Mammary epithelial cell (primary cell): ENCODE measurements at regions of chr4 and their contacts with region 1.

Region 1: DNA sequence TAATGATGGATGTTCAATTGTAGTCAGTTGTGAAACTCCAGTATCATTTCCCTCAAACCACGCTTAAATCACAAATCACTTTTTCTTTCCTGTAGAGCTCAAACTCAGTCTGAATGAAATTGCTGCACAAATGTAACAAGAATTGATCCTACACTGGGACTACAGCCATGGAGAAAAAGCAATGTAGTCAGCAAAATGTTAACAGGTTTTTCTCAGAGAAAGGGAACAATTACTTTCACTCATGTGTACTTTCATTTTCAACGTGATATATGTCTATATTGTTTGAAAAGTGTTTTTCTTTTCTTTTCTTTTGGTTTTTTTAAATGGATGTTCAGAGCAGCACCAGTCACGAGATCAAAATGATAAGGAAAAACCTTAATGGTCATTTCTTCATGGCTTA is 22.7 kb downstream of the SDAD1 start:
- DNase-seq: no peak
- H3K4me3 ChIP-seq: no peak overlapping the region
- H3K27ac ChIP-seq: no peak overlapping the region
- H3K4me1 ChIP-seq: no peaks in the 10 kb centered on the region
- H3K27me3 ChIP-seq: no peaks in the 10 kb centered on the region
- CTCF ChIP-seq: no peak

Region 2: DNA sequence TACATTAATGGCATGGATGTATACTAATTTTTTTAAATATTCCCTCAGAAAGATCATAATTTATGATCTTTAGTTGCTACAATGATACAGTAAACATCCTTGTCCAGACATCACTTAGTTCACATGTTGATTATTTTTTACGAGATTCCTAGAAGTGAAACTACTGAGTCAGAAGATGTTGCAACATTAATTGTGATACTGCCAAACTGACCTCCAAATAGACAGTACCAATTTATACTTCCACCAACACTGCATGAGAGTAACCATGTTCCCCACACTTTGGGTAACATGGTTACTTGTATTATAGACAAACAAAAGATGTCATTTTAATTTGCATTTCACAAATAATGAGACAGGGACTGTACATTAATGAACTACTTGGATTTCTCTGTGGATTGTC is 473.5 kb before region 1 on chr4:
- CTCF ChIA-PET with region 1: no interaction called
- dilution Hi-C with region 1: no loop called
- in situ Hi-C with region 1: no loop called
- intact Hi-C with region 1: no loop called
- DNase-seq: peak; percentile 84
- H3K4me3 ChIP-seq: no peak overlapping the region
- H3K27ac ChIP-seq: peak overlapping the region; percentile 47
- H3K4me1 ChIP-seq: peaks cover 7% of the 10 kb centered on the region
- H3K27me3 ChIP-seq: no peaks in the 10 kb centered on the region
- CTCF ChIP-seq: no peak

Region 3: GRCh38 chr4:75769036-75769435 is 199.0 kb before region 1 on chr4:
- CTCF ChIA-PET with region 1: no interaction called
- dilution Hi-C with region 1: no loop called
- in situ Hi-C with region 1: no loop called
- intact Hi-C with region 1: no loop called
- DNase-seq: no peak
- H3K4me3 ChIP-seq: no peak overlapping the region
- H3K27ac ChIP-seq: no peak overlapping the region
- H3K4me1 ChIP-seq: no peaks in the 10 kb centered on the region
- H3K27me3 ChIP-seq: no peaks in the 10 kb centered on the region
- CTCF ChIP-seq: no peak

Region 4: GRCh38 chr4:75786526-75786925 is 181.6 kb before region 1 on chr4:
- CTCF ChIA-PET with region 1: no interaction called
- dilution Hi-C with region 1: no loop called
- in situ Hi-C with region 1: no loop called
- intact Hi-C with region 1: loop called (anchors 10 kb)
- DNase-seq: no peak
- H3K4me3 ChIP-seq: no peak overlapping the region
- H3K27ac ChIP-seq: no peak overlapping the region
- H3K4me1 ChIP-seq: no peaks in the 10 kb centered on the region
- H3K27me3 ChIP-seq: no peaks in the 10 kb centered on the region
- CTCF ChIP-seq: no peak